ENCODE measurements at regions of chr19 and their contacts with region 1.

Region 1: DNA sequence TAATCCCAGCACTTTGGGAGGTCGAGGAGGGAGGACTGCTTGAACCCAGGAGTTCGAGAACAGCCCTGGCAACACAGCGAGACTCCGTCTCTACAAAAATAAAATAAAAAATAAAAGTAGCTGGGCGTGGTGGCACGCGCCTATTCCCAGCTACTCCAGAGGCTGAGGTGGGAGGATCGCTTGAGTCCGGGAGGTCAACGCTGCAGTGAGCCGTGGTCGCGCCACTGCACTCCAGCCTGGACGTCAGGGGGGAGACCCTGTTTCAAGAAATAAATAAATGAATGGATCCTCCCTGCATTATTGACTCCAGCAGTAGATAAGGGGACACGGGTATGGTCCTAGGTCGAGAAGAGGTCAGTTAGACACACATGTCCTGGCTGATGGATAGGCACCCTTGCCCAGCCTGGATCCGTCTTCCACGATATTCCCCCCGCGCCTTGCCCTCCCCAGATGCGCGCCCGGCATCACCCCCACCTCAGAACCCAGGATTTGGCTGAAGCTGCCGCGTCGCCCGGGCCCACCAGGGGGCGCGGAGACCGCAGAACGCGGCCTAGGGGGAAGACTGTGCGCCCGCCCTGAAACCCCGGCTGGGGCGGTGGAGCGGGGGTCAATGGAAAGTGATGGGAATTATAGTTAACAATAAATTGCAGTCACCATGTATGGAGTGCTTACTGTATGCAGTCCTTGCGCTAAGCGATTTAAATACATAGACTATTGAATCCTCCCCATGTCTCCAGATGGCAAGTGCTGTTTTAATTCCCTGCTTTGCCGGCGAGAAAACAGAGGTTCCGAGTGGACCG is 2.1 kb upstream of the HOOK2 start:
- DNase-seq: peak; percentile 76

Region 2: DNA sequence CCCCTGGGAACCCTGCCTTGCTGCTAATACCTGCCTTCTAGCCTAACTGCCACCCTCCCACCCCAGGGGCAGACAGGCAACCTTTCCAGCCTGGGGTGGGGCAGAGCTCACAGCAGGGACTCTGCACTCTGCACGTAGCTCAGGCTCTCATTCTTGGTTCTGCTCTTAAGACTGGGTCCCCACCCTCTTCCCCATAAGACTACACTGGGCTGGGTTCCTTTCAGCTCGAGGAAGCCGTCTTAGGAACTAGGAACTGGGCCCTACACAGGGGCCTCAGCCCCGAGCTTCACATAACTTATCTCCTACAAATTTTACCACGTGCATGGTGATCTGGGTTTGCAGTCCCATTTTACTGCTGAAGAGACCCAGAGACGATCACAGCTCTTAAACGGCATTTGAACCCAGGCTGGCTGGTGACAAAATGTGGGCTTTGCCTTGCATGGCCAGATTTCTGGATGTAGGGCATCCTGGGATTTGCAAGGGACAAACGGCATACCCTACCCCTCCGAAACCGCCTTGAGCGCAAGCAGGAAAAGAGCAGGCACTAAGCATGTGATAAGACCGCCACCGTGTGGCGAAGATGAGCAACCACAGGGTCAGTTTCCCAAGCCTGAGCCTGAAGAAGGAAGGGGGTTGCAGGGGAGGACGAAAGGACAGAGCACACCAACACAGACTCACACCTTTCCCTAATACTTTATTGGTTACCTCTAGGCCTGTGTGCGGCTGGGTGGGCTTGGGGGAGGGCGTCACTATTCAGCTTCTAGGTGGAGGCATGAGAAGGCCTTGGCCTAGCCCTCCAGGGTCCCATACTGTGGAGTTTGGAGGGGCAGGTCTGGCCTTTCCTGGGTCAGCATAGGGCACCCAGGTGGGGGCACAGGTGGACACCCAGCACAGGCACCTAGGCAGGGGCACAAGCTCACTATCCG is 19.0 kb after region 1 on chr19:
- CTCF ChIA-PET with region 1: interaction called, 19 read pairs
- POLR2A ChIA-PET with region 1: interaction called, 55 read pairs
- DNase-seq: peak; percentile 63